Kidney (tissue), 22 donors: ENCODE measurements at regions of chr2 and their contacts with region 1.

Region 1: DNA sequence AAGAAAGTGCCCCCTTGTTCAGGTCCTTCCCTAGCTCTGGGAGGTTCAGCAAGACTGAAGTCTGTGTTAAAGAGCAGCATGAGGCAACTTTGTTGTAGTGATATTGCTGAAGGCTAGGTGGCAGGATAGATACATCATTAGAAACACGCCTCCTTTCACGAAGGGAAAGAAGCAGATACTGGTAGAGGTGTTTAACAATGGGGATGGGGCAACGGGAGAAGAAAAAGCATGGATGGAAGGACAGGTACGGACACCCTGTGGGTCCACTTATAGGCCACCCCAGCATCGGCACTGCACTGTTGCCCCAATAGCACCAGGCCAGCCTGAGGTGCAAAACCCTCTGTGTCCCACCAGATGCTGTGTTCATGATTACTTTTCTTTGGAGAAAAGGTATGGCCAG is 3.5 kb upstream of the IGFBP5 start:
- DNase-seq: peak in 3 of 5 donors; percentile 44 to 84 (median 80)
- H3K4me3 ChIP-seq: no peak overlapping the region
- H3K27ac ChIP-seq: no peak overlapping the region
- H3K4me1 ChIP-seq: peaks cover 12 to 25% (median 19%) of the 10 kb centered on the region in 3 donors
- H3K27me3 ChIP-seq: no peaks in the 10 kb centered on the region
- CTCF ChIP-seq: peak; percentile 74

Region 2: DNA sequence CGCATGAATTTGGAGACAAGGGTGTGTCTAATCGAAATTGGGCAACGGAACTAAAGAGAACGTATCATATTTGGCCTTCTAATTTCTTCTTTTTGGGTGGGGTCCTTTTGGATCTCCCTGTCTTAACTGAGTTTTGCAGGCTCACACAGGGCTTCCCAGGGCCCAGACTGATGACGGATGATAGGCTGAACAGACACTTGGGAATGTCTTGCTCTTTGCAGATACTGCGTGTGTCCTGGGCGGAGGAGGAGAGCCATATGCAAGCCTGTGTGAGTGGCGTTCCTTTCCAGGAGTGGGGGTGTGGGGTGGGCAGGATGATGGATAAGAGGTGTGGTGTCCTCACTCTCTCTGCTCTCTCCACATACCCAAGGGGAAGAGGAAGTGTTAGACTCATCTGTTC is 120.9 kb after region 1 on chr2:
- intact Hi-C with region 1: no loop called
- DNase-seq: no peak
- H3K4me3 ChIP-seq: no peak overlapping the region
- H3K27ac ChIP-seq: no peak overlapping the region
- H3K4me1 ChIP-seq: no peaks in the 10 kb centered on the region
- H3K27me3 ChIP-seq: no peaks in the 10 kb centered on the region
- CTCF ChIP-seq: no peak

Region 3: DNA sequence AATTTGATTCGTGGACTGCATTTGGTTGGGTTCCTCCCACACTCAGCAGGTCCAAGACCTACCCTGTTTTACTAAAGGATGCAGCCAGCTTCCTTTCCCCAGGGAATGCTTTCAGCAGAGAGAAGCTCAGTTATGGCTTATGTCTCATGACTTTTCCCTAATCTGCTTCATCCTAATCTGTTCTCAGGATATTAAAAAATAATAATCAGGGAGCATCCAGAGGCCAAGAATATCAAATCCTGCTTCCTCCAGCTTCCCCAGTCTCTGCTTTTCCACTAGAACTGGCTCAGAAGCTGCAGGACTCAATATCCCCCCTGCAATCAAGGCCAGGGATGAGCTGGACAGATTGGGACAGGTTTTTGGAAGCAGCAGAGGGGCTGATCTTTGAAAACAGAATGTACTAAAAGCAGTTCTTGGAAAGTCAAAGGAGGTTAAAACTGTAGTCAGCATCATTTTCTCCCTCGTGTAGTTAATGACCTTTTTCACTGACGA is 487.8 kb after region 1 on chr2:
- intact Hi-C with region 1: loop called (anchors 10 kb)
- DNase-seq: no peak
- H3K4me3 ChIP-seq: no peak overlapping the region
- H3K27ac ChIP-seq: peak overlapping the region in 1 of 2 donors; percentile 16
- H3K4me1 ChIP-seq: no peaks in the 10 kb centered on the region
- H3K27me3 ChIP-seq: no peaks in the 10 kb centered on the region
- CTCF ChIP-seq: no peak

Region 4: DNA sequence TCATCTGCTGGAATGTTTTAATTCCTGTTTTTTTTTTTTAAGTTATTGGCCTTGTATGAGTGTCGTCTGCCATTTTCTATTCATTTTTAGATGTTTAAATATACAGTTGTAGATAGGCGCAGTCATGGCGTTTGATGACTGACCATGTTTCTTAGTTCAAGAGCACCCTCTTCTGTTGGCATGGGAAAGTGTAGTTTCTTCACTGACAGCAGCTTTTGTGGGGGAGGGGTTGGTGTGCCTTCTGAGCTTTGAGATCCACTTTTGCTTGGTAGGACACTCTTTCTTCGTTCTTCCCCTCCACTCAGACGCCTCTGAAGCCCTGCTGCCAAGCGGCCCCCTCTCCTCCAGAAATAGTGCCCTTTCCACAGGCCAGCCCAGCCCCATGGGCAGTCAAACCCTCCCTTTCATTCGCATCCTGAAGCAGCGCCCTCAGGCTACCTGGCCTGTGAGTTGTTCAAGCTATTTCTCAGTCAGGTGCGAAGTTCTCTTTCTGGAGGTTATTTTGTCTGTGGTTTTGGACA is 811.9 kb after region 1 on chr2:
- intact Hi-C with region 1: loop called (anchors 5 kb)
- DNase-seq: peak in 4 of 5 donors; percentile 82 to 94 (median 87)
- H3K4me3 ChIP-seq: peak overlapping the region in 1 of 3 donors; percentile 21
- H3K27ac ChIP-seq: no peak overlapping the region
- H3K4me1 ChIP-seq: peaks cover 0 to 5% (median 0%) of the 10 kb centered on the region in 3 donors
- H3K27me3 ChIP-seq: no peaks in the 10 kb centered on the region
- CTCF ChIP-seq: peak; percentile 71